CD4-positive, alpha-beta memory T cell (primary cell): ENCODE measurements at regions of chr14 and their contacts with region 1.

Region 1: GRCh38 chr14:76876076-76876475 is 49.9 kb downstream of the LRRC74A start:
- DNase-seq: peak in 4 of 5 donors; percentile 41 to 50 (median 44)
- H3K4me3 ChIP-seq: no peak overlapping the region
- H3K4me3 Mint-ChIP-seq: no peak overlapping the region
- H3K27ac ChIP-seq: no peak overlapping the region
- H3K27ac Mint-ChIP-seq: peak overlapping the region in 2 of 7 donors; percentile 10 to 31
- H3K4me1 ChIP-seq: no peaks in the 10 kb centered on the region
- H3K4me1 Mint-ChIP-seq: no peaks in the 10 kb centered on the region
- H3K27me3 ChIP-seq: no peaks in the 10 kb centered on the region
- H3K27me3 Mint-ChIP-seq: peaks cover 0 to 3% of the 10 kb centered on the region in 2 donors

Region 2: DNA sequence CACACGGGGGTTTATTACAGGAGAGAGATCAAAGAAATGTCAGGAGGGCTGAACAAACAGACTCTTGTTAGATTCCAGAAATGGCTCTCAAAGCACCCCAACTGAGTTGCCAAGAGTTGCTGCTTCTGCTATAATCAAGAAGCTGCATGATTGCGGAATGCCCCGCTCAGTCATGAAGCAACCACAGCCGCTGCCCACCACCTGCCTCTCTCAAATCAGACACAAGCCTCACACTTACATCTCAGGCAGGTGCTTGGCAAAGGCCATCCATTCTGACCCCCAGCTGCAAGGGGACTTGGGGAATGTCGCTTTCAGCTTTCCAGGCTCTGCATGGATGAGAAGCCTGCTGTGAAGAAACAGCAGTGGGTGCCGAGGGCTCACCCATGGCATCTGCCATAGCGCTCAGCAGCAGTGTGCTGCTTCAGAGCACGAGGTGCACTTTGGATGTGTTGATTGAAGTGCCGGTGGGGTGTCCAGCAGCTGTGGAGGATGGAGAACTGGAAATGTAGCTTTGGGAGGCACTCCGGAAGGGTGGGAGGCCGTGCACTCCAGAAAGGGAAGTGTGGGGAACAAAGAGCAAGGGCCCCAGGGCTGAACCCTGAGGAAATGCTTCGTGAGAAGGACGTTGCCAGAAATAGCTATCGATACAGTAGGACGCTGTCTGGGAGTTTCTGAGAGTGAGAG is 12.2 kb before region 1 on chr14:
- CTCF ChIA-PET with region 1: interaction called, 19 read pairs
- POLR2A ChIA-PET with region 1: no interaction called
- intact Hi-C with region 1: no loop called
- DNase-seq: no peak
- H3K4me3 ChIP-seq: no peak overlapping the region
- H3K4me3 Mint-ChIP-seq: peak overlapping the region in 4 of 8 donors; percentile 28 to 47 (median 44)
- H3K27ac ChIP-seq: no peak overlapping the region
- H3K27ac Mint-ChIP-seq: peak overlapping the region in 2 of 7 donors; percentile 70 to 89
- H3K4me1 ChIP-seq: peaks cover 13% of the 10 kb centered on the region
- H3K4me1 Mint-ChIP-seq: peaks cover 17 to 33% (median 24%) of the 10 kb centered on the region in 4 donors
- H3K27me3 ChIP-seq: no peaks in the 10 kb centered on the region
- H3K27me3 Mint-ChIP-seq: peaks cover 2 to 9% of the 10 kb centered on the region in 2 donors

Region 3: GRCh38 chr14:76904740-76905438 is 28.8 kb after region 1 on chr14:
- CTCF ChIA-PET with region 1: interaction called, 162 read pairs
- POLR2A ChIA-PET with region 1: no interaction called
- intact Hi-C with region 1: no loop called
- DNase-seq: peak; percentile 54 to 85 (median 62)
- H3K4me3 ChIP-seq: no peak overlapping the region
- H3K4me3 Mint-ChIP-seq: peak overlapping the region; percentile 54 to 77 (median 66)
- H3K27ac ChIP-seq: no peak overlapping the region
- H3K27ac Mint-ChIP-seq: peak overlapping the region; percentile 71 to 93 (median 88)
- H3K4me1 ChIP-seq: peaks cover 36% of the 10 kb centered on the region
- H3K4me1 Mint-ChIP-seq: peaks cover 21 to 36% (median 25%) of the 10 kb centered on the region in 4 donors
- H3K27me3 ChIP-seq: no peaks in the 10 kb centered on the region
- H3K27me3 Mint-ChIP-seq: no peaks in the 10 kb centered on the region

Region 4: DNA sequence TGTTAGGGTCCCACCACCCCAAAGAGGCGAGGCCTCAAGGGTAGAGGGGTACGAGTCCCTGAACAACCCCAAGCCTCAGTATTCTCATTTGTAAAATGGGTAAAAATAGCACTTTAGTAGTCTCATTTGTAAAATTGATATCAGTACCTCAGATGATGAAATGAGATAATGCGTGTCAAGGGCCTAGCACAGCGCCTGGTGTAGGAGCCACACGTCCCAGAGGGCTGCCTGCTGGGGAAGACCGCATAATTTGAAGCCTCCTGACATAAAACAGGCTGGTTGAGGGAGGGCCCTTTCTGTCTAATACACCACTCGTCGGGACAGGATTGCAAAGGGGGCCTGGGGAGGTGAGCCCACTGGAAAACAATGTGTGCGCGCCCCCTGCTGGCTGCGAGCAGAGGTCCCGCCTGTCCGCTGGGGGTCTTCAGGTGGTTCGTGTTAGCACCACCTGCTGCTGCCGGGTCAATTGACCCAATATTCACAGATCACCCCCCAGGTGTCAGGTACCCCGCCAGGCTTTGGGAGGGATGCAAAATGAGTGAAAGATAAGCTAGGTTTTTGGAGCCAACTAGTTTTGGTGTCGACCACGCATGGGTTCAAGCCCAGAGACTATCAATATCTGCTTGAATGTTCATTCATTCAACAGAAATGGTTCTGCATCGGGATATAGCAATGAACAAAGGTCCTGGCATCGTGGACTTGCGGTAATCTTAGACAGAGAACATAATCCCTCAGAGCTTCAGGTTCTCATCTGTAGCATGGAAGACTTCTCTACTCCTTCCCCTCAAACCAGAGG is 177.2 kb after region 1 on chr14:
- CTCF ChIA-PET with region 1: interaction called, 90 read pairs
- POLR2A ChIA-PET with region 1: no interaction called
- intact Hi-C with region 1: loop called (anchors 1 kb)
- DNase-seq: peak; percentile 68 to 75 (median 69)
- H3K4me3 ChIP-seq: no peak overlapping the region
- H3K4me3 Mint-ChIP-seq: peak overlapping the region in 1 of 8 donors; percentile 51
- H3K27ac ChIP-seq: no peak overlapping the region
- H3K27ac Mint-ChIP-seq: peak overlapping the region in 6 of 7 donors; percentile 24 to 79 (median 49)
- H3K4me1 ChIP-seq: peaks cover 25% of the 10 kb centered on the region
- H3K4me1 Mint-ChIP-seq: peaks cover 16 to 36% (median 22%) of the 10 kb centered on the region in 4 donors
- H3K27me3 ChIP-seq: no peaks in the 10 kb centered on the region
- H3K27me3 Mint-ChIP-seq: no peaks in the 10 kb centered on the region

Region 5: GRCh38 chr14:77086017-77086736 is 210.1 kb after region 1 on chr14:
- CTCF ChIA-PET with region 1: interaction called, 186 read pairs
- POLR2A ChIA-PET with region 1: no interaction called
- intact Hi-C with region 1: no loop called
- DNase-seq: peak in 4 of 5 donors; percentile 41 to 59 (median 48)
- H3K4me3 ChIP-seq: no peak overlapping the region
- H3K4me3 Mint-ChIP-seq: peak overlapping the region in 1 of 8 donors; percentile 33
- H3K27ac ChIP-seq: no peak overlapping the region
- H3K27ac Mint-ChIP-seq: peak overlapping the region in 5 of 7 donors; percentile 68 to 97 (median 90)
- H3K4me1 ChIP-seq: peaks cover 17% of the 10 kb centered on the region
- H3K4me1 Mint-ChIP-seq: peaks cover 4 to 19% (median 8%) of the 10 kb centered on the region in 4 donors
- H3K27me3 ChIP-seq: no peaks in the 10 kb centered on the region
- H3K27me3 Mint-ChIP-seq: peaks cover 2 to 9% of the 10 kb centered on the region in 2 donors